Cardiac septum (tissue), 1 donor: ENCODE measurements at regions of chr1 and their contacts with region 1.

Region 1: GRCh38 chr1:205631727-205632373 is at the start of gene ELK4:
- DNase-seq: peak; percentile 98
- total RNA-seq, gene ELK4: 42.3 TPM

Region 2: DNA sequence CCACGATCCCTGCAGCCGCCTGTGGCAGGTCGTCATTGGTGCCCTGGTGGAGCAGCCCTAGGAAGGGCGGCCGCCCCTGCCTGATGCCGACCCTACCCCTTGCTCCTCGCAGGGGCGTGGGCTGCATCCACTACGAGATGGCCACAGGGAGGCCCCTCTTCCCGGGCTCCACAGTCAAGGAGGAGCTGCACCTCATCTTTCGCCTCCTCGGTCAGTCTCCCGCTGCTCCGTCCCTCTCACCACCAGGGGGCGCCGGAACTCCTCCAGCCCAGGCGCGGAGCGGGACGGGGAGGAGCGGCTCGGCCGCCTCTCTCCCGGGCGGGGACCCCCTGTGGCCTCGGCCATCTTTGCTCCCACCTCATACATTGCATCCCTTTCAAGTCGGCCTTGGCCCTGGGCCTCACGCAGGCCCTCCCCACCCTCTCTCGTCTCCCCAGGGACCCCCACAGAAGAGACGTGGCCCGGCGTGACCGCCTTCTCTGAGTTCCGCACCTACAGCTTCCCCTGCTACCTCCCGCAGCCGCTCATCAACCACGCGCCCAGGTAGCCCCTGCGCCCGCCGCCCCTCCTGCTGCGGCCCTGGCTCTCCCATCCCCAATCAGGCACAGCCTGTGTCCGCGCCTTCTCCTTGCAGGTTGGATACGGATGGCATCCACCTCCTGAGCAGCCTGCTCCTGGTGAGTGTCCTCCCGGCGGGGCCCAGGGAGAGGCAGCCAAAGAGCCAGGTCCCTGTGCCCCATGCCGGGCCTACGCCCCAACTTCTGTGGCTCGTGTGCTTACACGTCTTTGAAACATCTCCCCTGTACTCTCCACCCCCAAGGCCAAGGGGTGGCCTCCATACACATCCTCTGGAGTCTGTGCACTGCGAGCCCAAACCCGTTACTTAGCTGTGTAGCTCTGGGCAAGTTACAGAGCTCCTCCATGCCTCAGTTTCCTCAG is 102.7 kb before region 1 on chr1:
- intact Hi-C with region 1: loop called (anchors 5 kb)
- DNase-seq: peak; percentile 89

Region 3: DNA sequence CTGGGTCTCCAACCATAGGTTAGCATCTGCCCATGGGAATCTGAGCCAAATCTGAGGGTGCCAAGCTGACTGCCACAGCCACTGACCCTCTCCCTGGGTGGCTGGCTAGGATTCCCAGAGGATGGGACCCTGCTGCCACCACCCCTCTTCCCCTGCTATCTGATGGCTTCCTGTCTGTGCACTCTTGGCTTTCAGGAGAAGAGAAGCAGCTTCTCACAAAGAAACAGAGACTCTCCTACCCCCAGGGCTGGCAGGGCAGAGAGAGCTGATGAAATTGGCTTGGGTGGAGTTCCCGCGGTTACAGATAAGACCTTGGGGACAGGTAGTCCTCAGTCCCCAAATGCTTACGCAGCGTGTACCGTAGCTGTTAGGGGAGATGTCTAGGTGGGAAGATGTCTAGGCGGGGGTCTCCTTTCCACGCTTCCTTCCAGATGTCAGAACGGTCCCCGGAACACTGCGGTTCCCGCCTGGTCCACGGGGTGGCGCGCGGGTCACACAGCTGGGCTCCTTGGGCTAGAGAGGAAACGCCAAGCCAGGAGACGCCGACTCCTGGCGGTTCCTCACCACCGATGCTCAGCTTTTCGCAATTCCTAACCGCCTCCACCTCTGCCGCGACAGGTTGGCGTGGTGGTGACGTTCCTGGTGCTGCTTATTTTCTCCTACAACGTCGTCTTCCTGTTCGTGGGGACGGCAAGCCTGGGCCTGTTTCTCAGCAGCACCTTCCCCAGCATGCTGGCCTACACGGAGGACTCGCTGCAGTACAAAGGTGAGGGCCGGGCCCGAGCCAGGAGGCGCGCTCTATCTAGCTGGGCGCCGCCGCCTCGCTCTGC is 40.1 kb before region 1 on chr1:
- intact Hi-C with region 1: loop called (anchors 1 kb)
- DNase-seq: peak; percentile 93

Region 4: DNA sequence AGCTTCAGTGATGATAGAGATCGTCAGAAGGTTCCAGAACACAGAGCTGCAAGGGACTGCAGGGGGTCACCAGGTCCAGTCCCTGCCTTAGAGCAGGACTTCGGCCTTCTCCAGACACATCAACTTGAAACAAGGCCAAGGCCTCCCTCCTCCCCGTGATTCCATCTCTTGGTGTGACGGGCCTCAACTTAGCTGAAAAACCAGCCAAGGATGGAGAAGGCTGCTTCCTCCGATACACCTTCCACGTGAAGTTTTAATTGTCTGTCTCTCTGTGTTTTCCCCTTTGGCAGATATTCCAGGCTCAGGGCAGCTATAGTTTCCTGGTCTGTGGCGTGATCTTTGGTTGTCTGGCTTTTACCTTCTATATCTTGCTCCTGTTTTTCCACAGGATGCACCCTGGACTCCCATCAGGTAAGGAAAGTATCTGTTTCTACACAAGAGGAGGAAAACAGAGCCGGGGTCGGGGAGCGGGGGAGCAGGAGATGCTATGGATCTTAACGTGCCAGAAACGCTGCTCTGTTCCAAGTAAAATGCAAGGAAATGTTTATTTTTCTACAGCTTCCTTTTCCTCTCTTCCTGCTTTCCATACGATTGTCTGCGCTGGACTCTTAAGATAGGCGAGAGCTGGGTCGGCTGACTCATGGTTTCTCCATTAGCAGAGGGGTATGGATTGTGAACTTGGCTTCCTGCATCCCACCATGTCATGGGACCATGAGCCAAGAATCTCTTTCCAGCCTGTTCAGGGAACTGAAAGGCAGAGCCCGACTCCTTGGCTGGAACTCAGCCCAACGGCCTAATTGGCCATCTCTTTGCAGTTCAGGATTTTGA is 32.8 kb before region 1 on chr1:
- intact Hi-C with region 1: loop called (anchors 2 kb)
- DNase-seq: peak; percentile 85

Region 5: GRCh38 chr1:205763980-205764379 is 132.1 kb after region 1 on chr1:
- intact Hi-C with region 1: no loop called
- DNase-seq: no peak